ENCODE measurements at regions of chr9 and their contacts with region 1.

Region 1: DNA sequence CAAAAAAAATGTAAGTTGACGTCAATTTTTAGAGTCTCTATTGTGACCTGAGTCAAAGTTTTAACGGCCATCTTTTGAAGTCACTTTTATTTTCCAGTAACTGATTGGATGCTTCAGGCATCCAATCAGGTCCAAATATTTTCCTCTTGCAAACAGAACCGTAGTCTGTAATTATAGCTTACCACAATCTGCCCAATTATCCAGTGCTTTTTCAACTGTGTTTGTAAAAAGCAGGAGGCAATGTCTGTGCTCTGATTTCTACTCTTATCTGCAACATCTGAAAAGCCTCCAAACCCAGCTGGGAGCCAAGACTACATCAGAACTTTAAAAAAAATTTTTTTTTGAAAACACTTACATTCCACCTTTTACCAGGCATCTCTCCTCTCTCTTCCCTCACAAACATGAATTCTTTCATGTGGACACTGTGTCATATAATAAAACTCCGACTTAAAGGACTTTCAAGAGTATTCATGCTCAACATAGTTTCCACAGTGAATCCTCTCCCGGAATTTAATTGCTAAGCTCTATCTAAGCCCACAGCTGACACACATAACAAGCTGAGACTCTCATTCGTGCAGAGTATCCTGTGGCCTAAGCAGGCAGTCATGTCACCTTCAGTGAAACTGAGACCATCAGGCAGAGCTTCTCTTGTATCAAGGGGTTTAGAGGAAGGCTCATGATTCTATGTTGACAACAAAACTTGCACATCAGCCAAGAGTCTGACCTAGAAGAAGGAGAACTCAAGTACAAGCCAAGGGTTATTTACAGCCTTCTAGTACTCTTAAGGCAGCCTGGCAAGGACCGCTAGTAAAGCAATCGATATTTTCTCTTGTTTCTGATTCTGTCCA is 272.7 kb downstream of the TLE1 start:
- DNase-seq: peak; percentile 50 to 79
- ATAC-seq: peak; percentile 95 to 99
- H3K4me3 ChIP-seq: no peak overlapping the region
- H3K27ac ChIP-seq: peak overlapping the region; percentile 59 to 79 (median 70)
- H3K4me1 ChIP-seq: peaks cover 18 to 32% of the 10 kb centered on the region in 2 donors
- H3K27me3 ChIP-seq: no peaks in the 10 kb centered on the region
- CTCF ChIP-seq: no peak
- POLR2A ChIP-seq: no peak

Region 2: DNA sequence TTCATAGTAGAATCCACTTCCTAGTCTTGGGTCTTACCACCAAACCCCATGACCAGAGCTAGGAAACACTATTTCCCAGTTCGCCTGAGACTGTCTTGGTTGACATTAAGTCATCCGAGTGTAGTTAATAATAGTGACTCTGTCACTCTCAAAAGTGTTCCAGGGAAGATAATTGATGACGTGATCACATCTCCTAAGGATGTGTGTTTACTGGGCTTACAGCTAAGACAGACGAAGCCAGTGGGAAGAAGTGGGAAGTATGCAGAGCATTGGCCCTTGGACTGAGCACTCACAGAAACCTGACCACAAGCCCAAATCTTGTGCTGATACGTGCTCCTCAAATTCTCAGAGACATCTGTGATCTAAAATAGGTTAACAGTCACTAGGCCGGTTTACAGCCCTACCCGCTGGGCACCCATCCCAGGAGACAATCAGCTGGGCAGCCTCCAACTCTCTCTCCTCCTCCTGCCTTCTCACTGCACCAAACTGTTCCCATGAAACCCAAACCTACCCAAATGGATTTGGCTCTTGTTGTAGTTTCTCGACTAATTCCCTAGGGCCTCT is 44.0 kb before region 1 on chr9:
- in situ Hi-C with region 1: no loop called
- intact Hi-C with region 1: loop called (anchors 1 kb)
- DNase-seq: peak; percentile 65 to 68
- ATAC-seq: peak; percentile 83 to 87
- H3K4me3 ChIP-seq: no peak overlapping the region
- H3K27ac ChIP-seq: peak overlapping the region; percentile 65 to 76 (median 69)
- H3K4me1 ChIP-seq: peaks cover 18 to 31% of the 10 kb centered on the region in 2 donors
- H3K27me3 ChIP-seq: no peaks in the 10 kb centered on the region
- CTCF ChIP-seq: no peak
- POLR2A ChIP-seq: no peak

Region 3: DNA sequence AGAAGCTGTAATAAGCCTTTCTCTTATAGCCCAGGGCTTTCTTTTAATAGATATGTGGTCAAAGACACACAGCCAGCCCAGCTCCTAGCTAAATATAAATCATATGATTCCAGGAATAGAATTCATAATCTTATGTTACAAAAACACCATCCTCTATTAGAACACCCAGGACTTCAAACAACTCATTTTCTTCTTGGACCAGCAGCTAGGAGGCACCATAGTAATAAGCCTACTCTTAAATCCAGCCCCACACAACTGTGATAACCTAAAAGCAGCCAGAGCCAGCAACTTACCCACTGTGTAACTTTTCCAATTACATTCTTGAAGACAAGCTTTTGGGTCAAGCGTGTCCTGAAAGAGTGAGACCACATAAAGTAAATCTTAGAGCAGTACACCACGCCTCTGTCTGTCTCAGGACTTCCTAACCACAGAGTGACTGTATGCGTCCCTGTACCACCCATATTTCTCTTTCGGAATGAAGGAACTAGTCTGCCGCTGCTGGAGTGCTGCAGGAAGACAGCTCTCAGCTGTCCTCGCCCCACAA is 48.9 kb after region 1 on chr9:
- in situ Hi-C with region 1: no loop called
- intact Hi-C with region 1: loop called (anchors 1 kb)
- DNase-seq: peak; percentile 40 to 45
- ATAC-seq: peak; percentile 92 to 97
- H3K4me3 ChIP-seq: peak overlapping the region; percentile 24 to 37 (median 35)
- H3K27ac ChIP-seq: peak overlapping the region; percentile 74 to 91 (median 86)
- H3K4me1 ChIP-seq: peaks cover 16 to 26% of the 10 kb centered on the region in 2 donors
- H3K27me3 ChIP-seq: no peaks in the 10 kb centered on the region
- CTCF ChIP-seq: peak; percentile 16 to 52 (median 46)
- POLR2A ChIP-seq: peak; percentile 33 to 77

Region 4: DNA sequence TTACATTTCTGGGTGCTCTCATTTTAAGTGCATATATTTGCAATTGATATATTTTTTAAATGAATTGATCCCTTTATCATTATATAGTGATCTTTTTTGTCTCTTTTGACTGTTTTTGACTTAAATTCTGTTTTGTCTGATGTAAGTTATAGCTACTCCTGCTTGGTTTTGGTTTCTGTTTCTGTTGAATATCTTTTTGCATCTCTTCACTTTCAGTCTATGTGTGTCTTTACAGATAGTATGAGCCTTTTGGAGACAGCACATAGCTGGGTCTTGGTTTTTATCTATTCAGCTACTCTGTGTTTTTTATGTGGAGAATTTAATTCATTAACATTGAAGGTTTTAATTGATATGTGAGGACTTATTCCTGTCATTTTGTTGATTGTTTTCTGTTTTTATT is 883.2 kb after region 1 on chr9:
- in situ Hi-C with region 1: no loop called
- intact Hi-C with region 1: loop called (anchors 1 kb)
- DNase-seq: no peak
- ATAC-seq: no peak
- H3K4me3 ChIP-seq: no peak overlapping the region
- H3K27ac ChIP-seq: no peak overlapping the region
- H3K4me1 ChIP-seq: peaks cover 9 to 10% of the 10 kb centered on the region in 2 donors
- H3K27me3 ChIP-seq: no peaks in the 10 kb centered on the region
- CTCF ChIP-seq: no peak
- POLR2A ChIP-seq: no peak